ENCODE measurements at regions of chr9 and their contacts with region 1.

Region 1: DNA sequence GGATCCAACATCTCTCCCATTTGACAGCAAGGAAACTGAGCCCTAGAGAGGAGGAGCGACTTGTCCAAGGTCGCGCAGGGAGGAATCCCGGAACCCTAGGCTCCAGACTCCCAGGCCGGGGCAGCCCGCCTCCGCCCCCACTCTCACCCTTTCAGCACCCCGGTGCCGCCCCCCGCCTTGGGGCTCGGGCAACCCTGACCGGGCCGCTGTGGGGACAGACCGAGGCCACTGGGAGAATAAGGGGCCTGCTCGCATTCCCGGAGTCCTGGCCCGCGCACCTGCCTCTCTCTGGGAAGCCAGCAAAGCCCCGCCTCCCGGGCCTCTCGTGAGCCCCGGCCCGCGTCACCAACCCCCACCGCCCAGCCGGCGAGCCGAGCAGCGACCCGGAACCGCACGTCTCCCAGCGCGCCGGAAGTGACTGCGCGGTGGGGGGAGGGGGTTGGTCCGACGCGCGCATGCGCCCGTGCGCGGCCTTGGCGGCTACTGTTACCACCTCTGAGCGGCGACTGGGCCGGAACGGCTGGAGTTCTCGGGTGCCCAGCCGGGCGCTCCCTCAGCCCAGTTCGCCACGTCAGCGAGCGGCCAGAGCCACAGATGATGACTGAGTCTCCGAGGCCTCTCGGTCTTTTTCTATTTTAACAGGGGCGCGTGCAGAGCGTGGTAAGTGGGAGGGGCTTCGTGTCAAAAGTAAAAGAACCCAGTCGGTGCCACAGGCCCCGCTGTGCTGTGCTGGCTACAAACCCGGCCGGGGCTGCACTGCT is at the start of gene GOLGA1:
- DNase-seq: peak; percentile 92
- H3K4me3 Mint-ChIP-seq: peak within 1 kb of the TSS; percentile 84
- H3K27ac Mint-ChIP-seq: peak within 1 kb of the TSS; percentile 94
- H3K4me1 Mint-ChIP-seq: peaks cover 10% of the 10 kb centered on the region
- H3K27me3 Mint-ChIP-seq: no peaks in the 10 kb centered on the region
- CTCF ChIP-seq: no peak
- total RNA-seq, gene GOLGA1: 22.8 and 29.9 TPM in 2 replicates

Region 2: GRCh38 chr9:124914753-124915405 is 26.0 kb before region 1 on chr9:
- CTCF ChIA-PET with region 1: no interaction called
- POLR2A ChIA-PET with region 1: no interaction called
- intact Hi-C with region 1: no loop called
- DNase-seq: no peak
- H3K4me3 Mint-ChIP-seq: no peak overlapping the region
- H3K27ac Mint-ChIP-seq: peak overlapping the region; percentile 47
- H3K4me1 Mint-ChIP-seq: no peaks in the 10 kb centered on the region
- H3K27me3 Mint-ChIP-seq: no peaks in the 10 kb centered on the region
- CTCF ChIP-seq: no peak

Region 3: GRCh38 chr9:124929464-124929863 is 11.4 kb before region 1 on chr9:
- CTCF ChIA-PET with region 1: no interaction called
- POLR2A ChIA-PET with region 1: interaction called, 12 read pairs
- intact Hi-C with region 1: no loop called
- DNase-seq: no peak
- H3K4me3 Mint-ChIP-seq: no peak overlapping the region
- H3K27ac Mint-ChIP-seq: no peak overlapping the region
- H3K4me1 Mint-ChIP-seq: no peaks in the 10 kb centered on the region
- H3K27me3 Mint-ChIP-seq: no peaks in the 10 kb centered on the region
- CTCF ChIP-seq: no peak

Region 4: GRCh38 chr9:124954255-124954654 is 13.4 kb after region 1 on chr9:
- CTCF ChIA-PET with region 1: no interaction called
- POLR2A ChIA-PET with region 1: interaction called, 10 read pairs
- intact Hi-C with region 1: no loop called
- DNase-seq: no peak
- H3K4me3 Mint-ChIP-seq: no peak overlapping the region
- H3K27ac Mint-ChIP-seq: no peak overlapping the region
- H3K4me1 Mint-ChIP-seq: no peaks in the 10 kb centered on the region
- H3K27me3 Mint-ChIP-seq: no peaks in the 10 kb centered on the region
- CTCF ChIP-seq: no peak